SK-N-SH (cell line): ENCODE measurements at regions of chr1 and their contacts with region 1.

Region 1: DNA sequence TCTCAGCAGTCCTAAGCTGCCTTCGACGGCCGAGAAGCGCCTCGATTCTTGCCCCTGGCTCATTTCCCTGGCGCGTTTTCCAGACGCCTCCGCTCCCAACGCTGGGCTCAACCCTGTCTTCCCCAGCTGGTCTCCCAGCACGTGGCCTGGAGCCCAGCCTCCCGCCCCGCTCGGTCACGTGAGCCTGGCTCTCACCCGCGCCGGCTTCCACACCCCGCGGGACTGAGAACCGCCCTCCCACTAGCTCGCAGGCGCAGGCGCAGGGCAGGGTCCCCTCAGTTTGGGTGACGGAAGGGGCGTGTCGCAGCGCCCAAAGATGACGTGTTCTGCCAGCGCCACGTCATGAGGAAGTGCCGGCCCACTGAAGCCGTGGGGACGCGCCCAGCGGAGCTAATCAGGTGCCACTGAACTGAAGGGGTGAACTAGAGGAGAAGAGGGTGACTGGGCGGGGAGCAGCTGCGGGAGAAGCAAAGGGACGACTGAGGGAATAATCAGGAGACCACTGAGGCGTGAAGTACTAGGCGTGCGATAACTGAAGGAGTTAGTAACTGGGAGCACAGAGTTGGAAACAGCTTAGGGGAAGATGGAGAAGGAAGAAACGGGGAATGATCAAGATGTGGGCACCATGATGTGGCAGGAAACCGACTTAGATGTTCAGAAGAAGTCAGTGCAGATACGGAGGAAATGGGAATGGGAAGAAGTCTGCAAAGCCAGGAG is at the start of gene DHDDS:
- DNase-seq: peak; percentile 98
- H3K4me3 ChIP-seq: peak within 1 kb of the TSS; percentile 73 to 83
- H3K27ac ChIP-seq: peak within 1 kb of the TSS; percentile 59 to 79; a peak in 3 of 4 replicates
- H3K4me1 ChIP-seq: peaks cover 7 to 8% of the 10 kb centered on the region in 2 experiments; a peak in 2 of 4 replicates
- H3K27me3 ChIP-seq: no peaks in the 10 kb centered on the region
- CTCF ChIP-seq: no peak
- EP300 ChIP-seq: no peak
- RAD21 ChIP-seq: no peak
- polyA plus RNA-seq, gene DHDDS: 25.0 and 36.6 TPM in 2 replicates

Region 2: DNA sequence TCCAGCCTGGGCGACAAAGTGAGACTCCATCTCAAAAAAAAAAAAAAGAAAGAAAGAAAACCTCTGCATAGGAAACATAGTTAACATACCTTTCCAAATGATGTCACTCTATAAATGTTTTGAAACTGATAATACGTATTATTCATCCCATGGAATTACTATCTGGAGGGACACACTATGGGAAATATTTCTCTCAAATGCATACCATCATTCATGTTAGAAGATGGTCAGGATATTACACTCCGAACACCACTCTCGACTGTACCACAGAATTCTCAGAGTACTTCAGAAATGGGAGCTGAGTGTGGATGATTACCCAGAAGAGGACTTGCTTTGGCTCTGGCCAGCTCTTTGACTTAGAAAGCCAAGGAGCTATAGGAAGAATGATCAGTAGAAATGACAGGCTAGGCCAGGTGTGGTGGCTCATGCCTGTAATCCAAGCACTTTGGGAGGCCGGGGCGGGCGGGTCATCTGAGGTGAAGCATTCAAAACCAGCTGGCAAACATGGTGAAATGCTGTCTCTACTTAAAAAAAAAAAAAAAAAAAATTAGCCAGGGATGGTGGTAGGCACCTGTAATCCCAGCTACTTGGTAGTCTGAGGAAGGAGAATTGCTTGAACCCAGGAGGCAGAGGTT is 26.7 kb before region 1 on chr1:
- CTCF ChIA-PET with region 1: no interaction called
- POLR2A ChIA-PET with region 1: no interaction called
- DNase-seq: no peak
- H3K4me3 ChIP-seq: peak overlapping the region in 1 of 2 experiments; percentile 23; a peak in 1 of 4 replicates
- H3K27ac ChIP-seq: peak overlapping the region in 1 of 2 experiments; percentile 49; a peak in 2 of 4 replicates
- H3K4me1 ChIP-seq: peaks cover 0 to 7% of the 10 kb centered on the region in 2 experiments; a peak in 1 of 4 replicates
- H3K27me3 ChIP-seq: no peaks in the 10 kb centered on the region
- CTCF ChIP-seq: no peak
- EP300 ChIP-seq: no peak
- RAD21 ChIP-seq: no peak

Region 3: GRCh38 chr1:26472901-26473845 is 41.0 kb after region 1 on chr1:
- CTCF ChIA-PET with region 1: interaction called, 3 read pairs
- POLR2A ChIA-PET with region 1: interaction called, 16 read pairs
- DNase-seq: peak; percentile 98
- H3K4me3 ChIP-seq: peak overlapping the region; percentile 94 to 95
- H3K27ac ChIP-seq: peak overlapping the region; percentile 96 to 98
- H3K4me1 ChIP-seq: peaks cover 6 to 26% of the 10 kb centered on the region in 2 experiments; a peak in 3 of 4 replicates
- H3K27me3 ChIP-seq: no peaks in the 10 kb centered on the region
- CTCF ChIP-seq: no peak
- EP300 ChIP-seq: no peak
- RAD21 ChIP-seq: no peak